A673 (cell line): ENCODE measurements at regions of chr2 and their contacts with region 1.

Region 1: DNA sequence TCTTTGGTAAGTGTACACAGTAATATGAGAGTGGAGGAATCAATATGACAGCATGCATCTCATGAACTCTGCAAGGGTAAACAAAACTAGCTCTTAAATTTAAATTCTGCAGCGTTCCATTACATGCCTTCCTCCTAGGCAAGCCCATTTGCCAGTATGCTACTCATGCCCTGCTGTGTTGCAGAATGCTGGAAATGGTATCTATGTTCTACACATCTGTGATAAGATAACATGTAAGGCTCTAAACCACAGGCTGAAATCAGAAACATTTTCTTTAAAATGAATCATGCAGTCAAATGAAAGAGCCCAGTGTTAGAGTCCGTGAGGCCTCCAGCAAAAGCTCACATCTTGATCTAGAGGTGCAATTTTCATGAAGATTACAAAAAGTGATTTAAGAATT is 112.8 kb upstream of the FN1 start:
- DNase-seq: no peak
- H3K4me3 ChIP-seq: no peak overlapping the region
- H3K27ac ChIP-seq: no peak overlapping the region
- H3K4me1 ChIP-seq: peaks cover 5% of the 10 kb centered on the region
- H3K27me3 ChIP-seq: no peaks in the 10 kb centered on the region
- CTCF ChIP-seq: no peak

Region 2: GRCh38 chr2:215635788-215636139 is 87.0 kb after region 1 on chr2:
- CTCF ChIA-PET with region 1: no interaction called
- POLR2A ChIA-PET with region 1: interaction called, 11 read pairs
- intact Hi-C with region 1: no loop called
- DNase-seq: peak; percentile 30
- H3K4me3 ChIP-seq: no peak overlapping the region
- H3K27ac ChIP-seq: no peak overlapping the region
- H3K4me1 ChIP-seq: no peaks in the 10 kb centered on the region
- H3K27me3 ChIP-seq: no peaks in the 10 kb centered on the region
- CTCF ChIP-seq: peak; percentile 35; the same call in 1 of the 2 replicates